Transverse colon (tissue), 4 donors: ENCODE measurements at regions of chr14 and their contacts with region 1.

Region 1: DNA sequence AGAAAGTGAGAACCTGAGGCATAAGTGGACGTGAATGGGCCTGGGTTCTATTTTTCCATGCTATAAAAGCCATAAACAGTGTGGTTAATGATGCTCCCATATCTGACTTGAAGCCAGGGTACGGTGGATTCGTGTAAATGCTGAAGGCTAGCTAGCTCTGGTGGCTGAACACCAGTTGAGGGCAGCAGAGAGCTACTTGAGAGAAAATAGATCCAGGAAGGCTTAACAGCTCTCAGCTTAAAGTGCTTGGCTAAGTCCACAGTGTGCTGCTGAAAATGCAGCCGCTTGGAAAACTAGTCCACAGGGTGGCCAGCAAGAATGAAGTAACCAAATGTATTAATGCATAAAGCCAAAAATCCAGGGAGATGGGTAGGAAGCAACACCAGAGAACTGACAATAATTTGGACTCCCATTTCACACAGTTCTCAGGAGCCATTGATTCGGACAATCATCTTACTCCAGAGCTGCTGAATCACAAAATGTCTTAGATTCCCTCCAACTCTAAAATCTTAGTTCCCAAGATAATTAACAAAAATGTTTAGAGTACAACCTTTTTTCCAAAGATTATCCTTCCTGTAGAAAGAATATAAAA is 15.0 kb upstream of the FOXG1 start:
- DNase-seq: no peak
- H3K4me3 ChIP-seq: no peak overlapping the region
- H3K27ac ChIP-seq: no peak overlapping the region
- H3K4me1 ChIP-seq: no peaks in the 10 kb centered on the region
- H3K27me3 ChIP-seq: peaks cover 37% of the 10 kb centered on the region
- CTCF ChIP-seq: peak in 4 of 5 experiments; percentile 28 to 42 (median 34)
- EP300 ChIP-seq: no peak
- POLR2A ChIP-seq: no peak

Region 2: DNA sequence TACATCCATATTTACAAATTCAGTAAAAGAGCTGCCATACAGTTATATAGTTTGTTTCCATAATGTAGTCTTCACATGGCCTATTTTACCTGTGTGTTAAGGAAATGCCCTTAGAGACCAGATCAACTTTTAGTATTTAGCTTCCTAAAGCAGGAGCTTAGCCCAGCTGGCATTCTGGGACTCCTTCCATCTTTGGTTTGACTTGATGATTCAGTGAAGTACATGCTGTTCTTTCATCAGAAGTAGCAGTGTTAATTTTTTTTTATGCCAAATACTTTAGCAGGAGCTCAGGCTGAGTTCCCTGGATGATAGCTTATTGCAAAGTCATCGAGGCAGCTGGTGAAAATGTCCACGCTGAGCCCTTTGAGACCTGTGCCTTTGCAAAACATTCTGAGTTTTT is 116.0 kb after region 1 on chr14:
- in situ Hi-C with region 1: no loop called
- intact Hi-C with region 1: no loop called
- DNase-seq: no peak
- H3K4me3 ChIP-seq: no peak overlapping the region
- H3K27ac ChIP-seq: no peak overlapping the region
- H3K4me1 ChIP-seq: no peaks in the 10 kb centered on the region
- H3K27me3 ChIP-seq: no peaks in the 10 kb centered on the region
- CTCF ChIP-seq: no peak
- EP300 ChIP-seq: no peak
- POLR2A ChIP-seq: no peak

Region 3: GRCh38 chr14:29548948-29549370 is 797.4 kb after region 1 on chr14:
- in situ Hi-C with region 1: loop called in 2 of 4 experiments (anchors 25 kb)
- intact Hi-C with region 1: no loop called
- DNase-seq: no peak
- H3K4me3 ChIP-seq: no peak overlapping the region
- H3K27ac ChIP-seq: no peak overlapping the region
- H3K4me1 ChIP-seq: no peaks in the 10 kb centered on the region
- H3K27me3 ChIP-seq: no peaks in the 10 kb centered on the region
- CTCF ChIP-seq: peak; percentile 32 to 65 (median 54)
- EP300 ChIP-seq: no peak
- POLR2A ChIP-seq: no peak

Region 4: DNA sequence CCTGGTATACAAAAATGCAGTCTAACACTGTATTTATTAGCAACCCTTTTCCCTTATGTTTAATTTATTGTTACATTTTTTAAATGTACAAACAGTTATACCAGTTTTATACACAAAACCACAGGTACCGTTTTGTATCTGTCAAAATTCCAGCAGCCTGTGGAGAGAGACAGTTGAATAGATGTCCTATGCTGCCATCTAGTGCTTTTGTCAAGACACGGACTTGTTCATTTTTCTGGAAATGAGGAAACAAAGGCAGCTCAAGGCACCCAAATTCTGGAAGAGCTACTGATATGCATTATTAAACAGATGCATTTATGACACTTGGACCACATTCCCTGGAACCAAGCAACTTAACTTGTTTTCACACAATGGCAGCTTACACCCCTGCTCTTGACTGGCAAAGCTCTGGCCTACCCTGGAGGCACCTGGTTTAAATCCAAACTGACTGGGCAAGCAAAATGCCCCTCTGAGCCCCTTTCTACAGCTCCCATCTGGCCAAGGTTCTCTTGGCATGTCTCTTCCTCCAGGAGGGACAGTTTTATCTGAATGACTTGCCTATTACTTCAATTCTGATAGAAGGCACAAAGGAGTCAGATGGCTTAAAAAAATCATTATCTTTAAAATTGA is 1463.0 kb after region 1 on chr14:
- in situ Hi-C with region 1: loop called in 1 of 4 experiments (anchors 25 kb)
- intact Hi-C with region 1: no loop called
- DNase-seq: no peak
- H3K4me3 ChIP-seq: no peak overlapping the region
- H3K27ac ChIP-seq: no peak overlapping the region
- H3K4me1 ChIP-seq: no peaks in the 10 kb centered on the region
- H3K27me3 ChIP-seq: no peaks in the 10 kb centered on the region
- CTCF ChIP-seq: peak; percentile 37 to 47 (median 42)
- EP300 ChIP-seq: no peak
- POLR2A ChIP-seq: no peak